Activated T-helper 2 cell treated with anti-CD3 and anti-CD28 coated beads, Interferon-gamma antibody, Interleukin-2, Interleukin-4, amounts not matched to agents 10 μg/mL and 5 μg/mL and 100 μg/mL, durations not matched to agents 14 hours and 24 hours and 36 hours (primary cell): ENCODE measurements at regions of chr12 and their contacts with region 1.

Region 1: GRCh38 chr12:57546438-57547383 is at the start of gene DCTN2:
- DNase-seq: peak; percentile 94
- H3K4me3 Mint-ChIP-seq: peak within 1 kb of the TSS; percentile 98
- H3K27ac Mint-ChIP-seq: peak within 1 kb of the TSS; percentile 95
- H3K4me1 Mint-ChIP-seq: peaks cover 49% of the 10 kb centered on the region
- H3K27me3 Mint-ChIP-seq: peaks cover 12% of the 10 kb centered on the region
- total RNA-seq, gene DCTN2: 96.7 and 101 TPM in 2 replicates

Region 2: GRCh38 chr12:57476162-57476992 is 70.3 kb before region 1 on chr12:
- intact Hi-C with region 1: loop called (anchors 2 kb)
- DNase-seq: peak; percentile 72
- H3K4me3 Mint-ChIP-seq: peak overlapping the region; percentile 93
- H3K27ac Mint-ChIP-seq: peak overlapping the region; percentile 100
- H3K4me1 Mint-ChIP-seq: peaks cover 47% of the 10 kb centered on the region
- H3K27me3 Mint-ChIP-seq: no peaks in the 10 kb centered on the region

Region 3: DNA sequence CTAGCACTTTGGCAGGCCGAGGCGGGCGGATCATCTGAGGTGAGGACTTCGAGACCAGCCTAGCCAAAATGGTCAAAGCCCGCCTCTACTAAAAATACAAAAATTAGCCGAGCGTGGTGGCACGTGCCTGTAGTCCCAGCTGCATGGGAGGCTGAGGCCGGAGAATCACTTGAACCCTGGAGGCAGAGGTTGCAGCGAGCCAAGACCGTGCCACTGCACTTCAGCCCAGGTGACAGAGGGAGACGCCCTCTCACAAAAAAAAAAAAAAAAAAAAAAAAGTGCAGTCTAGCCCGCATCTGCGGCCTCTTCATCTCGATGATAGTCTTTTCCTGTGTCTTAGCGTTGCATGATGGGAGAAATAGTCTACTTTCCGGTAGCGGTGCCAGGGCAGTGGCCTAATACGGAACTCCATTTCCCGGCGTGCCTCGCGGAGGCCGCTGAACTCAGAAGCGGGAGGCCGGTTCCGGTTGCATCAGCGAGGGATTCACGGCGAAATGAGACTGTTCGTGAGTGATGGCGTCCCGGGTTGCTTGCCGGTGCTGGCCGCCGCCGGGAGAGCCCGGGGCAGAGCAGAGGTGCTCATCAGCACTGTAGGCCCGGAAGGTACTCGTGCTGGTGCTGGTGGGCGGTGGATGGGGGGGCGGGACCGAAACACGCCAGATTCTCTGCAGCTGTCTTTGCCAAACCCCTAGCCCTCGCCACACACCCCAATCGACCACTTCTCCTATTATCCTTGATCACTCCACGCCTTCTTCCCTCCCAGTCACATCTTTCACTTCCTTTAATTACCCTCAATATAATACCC is 58.9 kb before region 1 on chr12 and contains the start of gene MARS1:
- intact Hi-C with region 1: loop called (anchors 2 kb)
- DNase-seq: peak; percentile 92
- H3K4me3 Mint-ChIP-seq: peak within 1 kb of the TSS; percentile 99
- H3K27ac Mint-ChIP-seq: peak within 1 kb of the TSS; percentile 95
- H3K4me1 Mint-ChIP-seq: peaks cover 25% of the 10 kb centered on the region
- H3K27me3 Mint-ChIP-seq: no peaks in the 10 kb centered on the region
- total RNA-seq, gene MARS1: 249 and 257 TPM in 2 replicates

Region 4: GRCh38 chr12:57590536-57591479 is 44.1 kb after region 1 on chr12 and contains the start of gene PIP4K2C:
- intact Hi-C with region 1: loop called (anchors 1 kb)
- DNase-seq: peak; percentile 73
- H3K4me3 Mint-ChIP-seq: peak within 1 kb of the TSS; percentile 86
- H3K27ac Mint-ChIP-seq: peak within 1 kb of the TSS; percentile 69
- H3K4me1 Mint-ChIP-seq: peaks cover 16% of the 10 kb centered on the region
- H3K27me3 Mint-ChIP-seq: no peaks in the 10 kb centered on the region
- total RNA-seq, gene PIP4K2C: 23.2 and 24.6 TPM in 2 replicates